ENCODE measurements at regions of chr10 and their contacts with region 1.

Region 1: DNA sequence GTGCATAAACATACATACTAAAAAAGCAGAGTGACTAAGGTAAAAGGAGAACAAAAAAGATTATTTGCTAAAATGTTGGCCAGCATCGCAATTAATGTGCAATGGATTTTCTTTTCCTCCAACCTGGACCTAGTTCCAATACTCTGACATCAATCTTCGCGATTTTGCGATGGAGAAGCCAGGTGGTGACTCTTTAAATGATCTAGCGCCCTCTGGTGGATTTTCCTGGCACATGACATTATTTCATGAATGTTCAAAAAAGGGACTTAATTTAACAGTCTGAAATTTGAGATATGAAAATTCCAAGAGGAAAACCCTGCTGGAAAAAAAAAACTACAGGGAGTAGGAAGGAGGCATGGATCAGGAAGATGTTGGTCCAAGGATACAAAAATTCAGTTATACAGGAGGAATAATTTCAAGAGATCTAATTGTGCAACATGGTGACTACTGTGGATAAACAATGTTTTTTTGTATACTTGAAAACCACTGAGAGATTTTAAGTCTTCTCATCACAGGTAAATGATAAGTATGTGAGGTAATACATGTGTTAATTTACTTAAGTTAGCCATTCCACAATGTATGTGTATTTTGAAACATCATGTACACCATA is 4.3 kb upstream of the KCNMA1 start:
- DNase-seq: peak; percentile 48 to 78
- H3K4me3 ChIP-seq: no peak overlapping the region
- H3K4me1 ChIP-seq: no peaks in the 10 kb centered on the region
- H3K27me3 ChIP-seq: peaks cover 34% of the 10 kb centered on the region

Region 2: DNA sequence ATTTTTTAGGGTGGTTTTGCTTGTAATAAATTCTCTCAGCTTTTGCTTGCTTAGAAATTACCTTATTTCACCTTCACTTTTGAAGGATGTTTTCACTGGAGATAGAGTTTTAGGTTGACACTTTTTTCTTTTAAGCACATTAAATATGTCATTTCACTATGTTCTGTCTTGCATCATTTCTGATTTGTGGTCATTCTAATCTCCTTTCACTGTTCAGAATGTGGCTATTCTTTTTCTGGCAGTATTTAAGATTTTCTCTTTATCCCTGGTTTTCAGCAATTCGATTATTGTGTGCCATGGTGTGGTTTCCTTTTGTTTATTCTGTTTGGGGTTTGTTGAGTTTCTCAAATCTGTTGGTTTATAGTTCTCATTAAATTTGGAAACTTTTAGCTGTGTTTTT is 1069.9 kb before region 1 on chr10:
- in situ Hi-C with region 1: no loop called
- DNase-seq: no peak
- H3K4me3 ChIP-seq: no peak overlapping the region
- H3K4me1 ChIP-seq: no peaks in the 10 kb centered on the region
- H3K27me3 ChIP-seq: no peaks in the 10 kb centered on the region

Region 3: DNA sequence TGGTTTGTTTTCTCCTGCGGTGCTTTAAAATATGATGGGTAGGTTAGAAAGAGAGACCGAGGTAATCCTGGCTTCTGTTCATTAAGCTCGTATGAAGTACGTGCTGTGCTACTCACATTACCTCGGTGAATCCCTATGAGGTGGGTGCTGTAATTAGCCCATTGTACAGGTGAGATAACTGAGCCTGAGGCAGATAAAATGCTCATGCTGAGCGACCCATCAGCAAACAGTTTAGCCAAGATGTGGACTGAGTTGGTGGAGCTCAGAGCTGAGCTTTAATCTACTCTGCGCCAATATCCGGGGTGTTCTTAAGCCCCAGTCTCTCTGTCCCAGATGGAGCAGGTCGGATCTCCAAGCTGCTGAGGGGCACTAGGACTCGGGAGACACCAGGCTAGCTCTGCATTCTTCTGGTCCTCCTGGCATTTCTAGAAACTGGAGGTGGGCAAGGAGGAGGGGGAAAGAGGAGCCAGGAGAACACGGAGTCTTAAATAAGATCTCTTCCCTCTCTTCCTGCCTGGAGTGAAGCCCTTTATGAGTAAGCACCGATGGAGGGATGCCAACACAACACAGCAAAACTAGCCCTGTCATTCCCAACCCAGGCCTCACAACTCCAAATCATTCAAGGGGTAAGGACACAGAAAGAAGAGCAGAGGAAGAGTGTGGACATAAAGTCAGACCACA is 462.7 kb before region 1 on chr10:
- in situ Hi-C with region 1: loop called (anchors 5 kb)
- DNase-seq: no peak
- H3K4me3 ChIP-seq: no peak overlapping the region
- H3K4me1 ChIP-seq: no peaks in the 10 kb centered on the region
- H3K27me3 ChIP-seq: 0 out of 2 replicates have a peak, but pooled peaks cover 6% of the 10 kb centered on the region

Region 4: DNA sequence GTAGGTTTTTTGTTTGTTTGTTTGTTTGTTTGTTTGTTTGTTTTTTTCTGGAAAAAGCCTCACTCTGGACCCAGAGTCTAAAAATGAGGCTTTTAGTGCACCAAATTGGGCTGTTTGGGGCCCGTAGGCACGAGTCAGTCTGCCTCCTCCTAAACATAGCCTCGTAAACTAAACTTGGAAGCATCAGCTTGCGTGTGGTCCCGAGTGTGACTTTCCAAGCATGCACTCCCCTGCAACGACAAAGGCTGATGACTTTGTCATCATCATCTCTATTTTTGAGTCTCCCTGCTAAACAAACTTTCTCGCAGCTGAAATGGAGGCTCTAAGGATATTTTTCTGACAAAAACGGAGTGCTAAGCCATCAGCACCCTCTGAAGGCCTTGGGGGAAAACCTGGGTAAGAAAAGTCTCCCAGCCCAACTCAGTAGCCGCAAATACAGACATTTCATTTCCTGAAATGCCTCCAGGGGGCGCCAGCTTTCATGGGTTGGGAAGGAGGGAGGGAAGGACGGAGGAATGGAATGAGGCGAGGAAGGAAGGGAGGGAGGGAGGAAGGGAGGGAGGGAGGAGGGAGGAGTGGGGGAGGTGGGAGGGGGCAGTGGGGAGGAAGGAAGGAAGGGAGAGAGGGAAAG is 250.2 kb before region 1 on chr10:
- in situ Hi-C with region 1: loop called (anchors 5 kb)
- DNase-seq: peak; percentile 42 to 83
- H3K4me3 ChIP-seq: no peak overlapping the region
- H3K4me1 ChIP-seq: no peaks in the 10 kb centered on the region
- H3K27me3 ChIP-seq: 0 out of 2 replicates have a peak, but pooled peaks cover 2% of the 10 kb centered on the region